ENCODE measurements at regions of chr6 and their contacts with region 1.

Region 1: DNA sequence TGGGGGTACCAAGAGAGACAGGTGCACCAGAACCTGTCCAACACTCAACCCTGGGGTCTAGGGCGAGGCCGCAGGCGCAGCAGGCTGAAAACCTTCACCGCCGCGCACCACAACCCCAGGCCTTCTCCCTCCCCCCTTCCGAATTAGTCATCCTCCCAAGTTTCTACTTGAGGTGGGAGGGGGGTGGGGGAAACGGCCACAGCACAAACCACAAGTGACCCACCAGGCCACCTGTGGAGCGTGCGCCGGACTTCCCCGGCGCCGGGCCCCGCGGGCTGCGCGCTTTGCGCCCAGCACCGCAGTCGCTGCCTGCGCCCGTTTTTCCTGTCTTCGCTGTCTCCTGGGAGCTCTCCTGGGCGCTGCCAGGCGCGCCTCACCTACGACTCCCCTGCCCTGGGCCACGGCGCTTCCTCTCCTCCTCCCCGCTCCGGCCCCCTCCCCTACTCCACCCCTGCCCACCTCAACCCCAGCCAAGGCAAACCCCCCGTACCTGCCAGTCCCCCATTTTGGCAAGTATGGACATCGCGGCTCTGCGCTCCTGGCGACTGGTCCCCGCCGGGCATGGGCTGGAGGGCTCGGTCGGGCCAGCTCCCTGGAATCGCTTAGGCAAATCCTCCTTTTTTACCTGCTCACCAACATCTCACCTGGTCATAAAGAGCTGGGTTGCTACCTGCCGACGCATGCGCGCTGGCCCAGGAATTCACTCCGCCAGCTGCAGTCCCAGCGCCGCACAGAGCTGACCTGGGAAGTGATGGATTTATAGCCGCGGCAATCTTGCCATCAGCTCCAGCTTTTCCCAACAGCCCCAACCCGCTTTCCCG is 4.3 kb upstream of the TFAP2A start:
- DNase-seq: peak; percentile 78 to 83
- H3K4me3 ChIP-seq: peak overlapping the region; percentile 73
- H3K27ac ChIP-seq: peak overlapping the region; percentile 98
- H3K4me1 ChIP-seq: peaks cover 27% of the 10 kb centered on the region
- H3K27me3 ChIP-seq: no peaks in the 10 kb centered on the region
- CTCF ChIP-seq: no peak

Region 2: GRCh38 chr6:9540534-9541126 is 878.5 kb before region 1 on chr6:
- CTCF ChIA-PET with region 1: no interaction called
- POLR2A ChIA-PET with region 1: interaction called, 20 read pairs
- intact Hi-C with region 1: no loop called
- DNase-seq: peak; percentile 22 to 38
- H3K4me3 ChIP-seq: no peak overlapping the region
- H3K27ac ChIP-seq: no peak overlapping the region
- H3K4me1 ChIP-seq: no peaks in the 10 kb centered on the region
- H3K27me3 ChIP-seq: no peaks in the 10 kb centered on the region
- CTCF ChIP-seq: peak; percentile 73

Region 3: GRCh38 chr6:10266061-10266460 is 153.1 kb before region 1 on chr6:
- CTCF ChIA-PET with region 1: interaction called, 4 read pairs
- POLR2A ChIA-PET with region 1: interaction called, 28 read pairs
- intact Hi-C with region 1: no loop called
- DNase-seq: no peak
- H3K4me3 ChIP-seq: no peak overlapping the region
- H3K27ac ChIP-seq: no peak overlapping the region
- H3K4me1 ChIP-seq: no peaks in the 10 kb centered on the region
- H3K27me3 ChIP-seq: no peaks in the 10 kb centered on the region
- CTCF ChIP-seq: no peak

Region 4: GRCh38 chr6:10381133-10381829 is 37.9 kb before region 1 on chr6:
- CTCF ChIA-PET with region 1: no interaction called
- POLR2A ChIA-PET with region 1: no interaction called
- intact Hi-C with region 1: no loop called
- DNase-seq: no peak
- H3K4me3 ChIP-seq: no peak overlapping the region
- H3K27ac ChIP-seq: no peak overlapping the region
- H3K4me1 ChIP-seq: 0 out of 2 replicates have a peak, but pooled peaks cover 5% of the 10 kb centered on the region
- H3K27me3 ChIP-seq: no peaks in the 10 kb centered on the region
- CTCF ChIP-seq: no peak